ENCODE measurements at regions of chr13 and their contacts with region 1.

Region 1: DNA sequence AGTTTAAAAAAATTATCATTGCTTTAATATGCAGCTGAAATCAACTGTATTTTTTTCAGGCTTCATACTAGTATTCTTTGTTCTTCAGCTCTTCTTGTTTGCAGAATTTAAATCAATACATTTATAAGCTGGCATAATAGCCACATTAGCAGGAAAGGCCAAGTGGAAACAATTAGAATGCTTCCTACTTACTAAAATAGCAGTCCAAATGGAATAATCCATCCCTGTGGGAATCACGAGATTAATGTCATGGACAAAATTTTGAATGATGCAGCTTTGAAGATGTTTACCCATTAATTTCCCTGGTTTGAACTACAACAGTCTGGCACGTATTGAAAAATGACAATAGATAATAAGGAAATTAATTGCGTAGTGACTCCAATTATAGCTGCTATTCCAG is 2650.8 kb downstream of the PCDH9 start:
- DNase-seq: no peak
- H3K4me3 ChIP-seq: no peak overlapping the region
- H3K27ac ChIP-seq: no peak overlapping the region
- H3K4me1 ChIP-seq: no peaks in the 10 kb centered on the region
- H3K27me3 ChIP-seq: no peaks in the 10 kb centered on the region
- CTCF ChIP-seq: no peak

Region 2: GRCh38 chr13:64305246-64305645 is 274.1 kb before region 1 on chr13:
- CTCF ChIA-PET with region 1: no interaction called
- POLR2A ChIA-PET with region 1: no interaction called
- intact Hi-C with region 1: loop called (anchors 5 kb)
- DNase-seq: no peak
- H3K4me3 ChIP-seq: no peak overlapping the region
- H3K27ac ChIP-seq: no peak overlapping the region
- H3K4me1 ChIP-seq: no peaks in the 10 kb centered on the region
- H3K27me3 ChIP-seq: no peaks in the 10 kb centered on the region
- CTCF ChIP-seq: no peak

Region 3: GRCh38 chr13:64662887-64663593 is 83.7 kb after region 1 on chr13:
- CTCF ChIA-PET with region 1: no interaction called
- POLR2A ChIA-PET with region 1: no interaction called
- intact Hi-C with region 1: no loop called
- DNase-seq: no peak
- H3K4me3 ChIP-seq: no peak overlapping the region
- H3K27ac ChIP-seq: no peak overlapping the region
- H3K4me1 ChIP-seq: no peaks in the 10 kb centered on the region
- H3K27me3 ChIP-seq: no peaks in the 10 kb centered on the region
- CTCF ChIP-seq: no peak

Region 4: DNA sequence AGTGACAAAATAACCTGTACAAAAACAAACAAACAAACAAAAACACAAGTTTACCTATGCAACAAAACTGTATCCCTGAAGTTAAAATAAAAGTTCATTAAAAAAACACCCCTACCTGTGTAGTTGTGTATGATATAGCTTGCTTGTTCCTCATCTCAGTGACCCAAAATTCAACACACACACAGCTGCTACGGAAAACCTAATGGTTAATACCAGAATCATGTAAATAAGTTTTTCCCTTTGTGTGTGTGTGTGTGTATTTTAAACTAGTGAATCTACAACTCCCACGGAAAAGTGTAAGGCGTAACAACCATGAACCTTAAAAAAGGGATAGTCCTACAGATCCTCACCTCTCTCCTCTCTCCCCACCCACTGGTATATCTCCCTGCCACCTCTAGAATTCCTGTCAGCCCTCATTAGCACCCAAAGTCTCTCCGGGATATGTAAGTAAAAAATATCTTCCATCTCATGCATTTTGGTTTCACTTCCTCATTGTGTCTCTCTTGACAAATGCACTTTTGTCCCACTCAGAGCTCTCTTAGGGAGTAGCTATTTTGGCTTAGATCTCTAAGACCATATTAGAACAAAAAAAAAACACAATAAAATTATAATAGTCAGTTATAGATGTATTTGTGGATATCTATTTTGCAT is 414.3 kb after region 1 on chr13:
- CTCF ChIA-PET with region 1: no interaction called
- POLR2A ChIA-PET with region 1: interaction called, 17 read pairs
- intact Hi-C with region 1: no loop called
- DNase-seq: no peak
- H3K4me3 ChIP-seq: no peak overlapping the region
- H3K27ac ChIP-seq: no peak overlapping the region
- H3K4me1 ChIP-seq: no peaks in the 10 kb centered on the region
- H3K27me3 ChIP-seq: no peaks in the 10 kb centered on the region
- CTCF ChIP-seq: no peak

Measured in PC-9 (cell line).